ENCODE measurements at regions of chr20 and their contacts with region 1.

Region 1: GRCh38 chr20:57266291-57267157 is at the start of gene BMP7:
- DNase-seq: no peak
- ATAC-seq: no peak
- H3K4me3 Mint-ChIP-seq: no peak within 1 kb of the TSS
- H3K27ac Mint-ChIP-seq: no peak within 1 kb of the TSS
- H3K4me1 Mint-ChIP-seq: peaks cover 3% of the 10 kb centered on the region
- H3K27me3 Mint-ChIP-seq: peaks cover 62% of the 10 kb centered on the region
- total RNA-seq, gene BMP7: 0.41 TPM in 1 of 2 experiments, not detected in the other

Region 2: GRCh38 chr20:56925082-56925830 is 341.3 kb before region 1 on chr20:
- CTCF ChIA-PET with region 1: no interaction called
- POLR2A ChIA-PET with region 1: no interaction called
- intact Hi-C with region 1: loop called in 1 of 2 experiments (anchors 10 kb)
- DNase-seq: peak; percentile 7
- ATAC-seq: no peak
- H3K4me3 Mint-ChIP-seq: no peak overlapping the region
- H3K27ac Mint-ChIP-seq: no peak overlapping the region
- H3K4me1 Mint-ChIP-seq: peaks cover 7% of the 10 kb centered on the region
- H3K27me3 Mint-ChIP-seq: peaks cover 67% of the 10 kb centered on the region

Region 3: DNA sequence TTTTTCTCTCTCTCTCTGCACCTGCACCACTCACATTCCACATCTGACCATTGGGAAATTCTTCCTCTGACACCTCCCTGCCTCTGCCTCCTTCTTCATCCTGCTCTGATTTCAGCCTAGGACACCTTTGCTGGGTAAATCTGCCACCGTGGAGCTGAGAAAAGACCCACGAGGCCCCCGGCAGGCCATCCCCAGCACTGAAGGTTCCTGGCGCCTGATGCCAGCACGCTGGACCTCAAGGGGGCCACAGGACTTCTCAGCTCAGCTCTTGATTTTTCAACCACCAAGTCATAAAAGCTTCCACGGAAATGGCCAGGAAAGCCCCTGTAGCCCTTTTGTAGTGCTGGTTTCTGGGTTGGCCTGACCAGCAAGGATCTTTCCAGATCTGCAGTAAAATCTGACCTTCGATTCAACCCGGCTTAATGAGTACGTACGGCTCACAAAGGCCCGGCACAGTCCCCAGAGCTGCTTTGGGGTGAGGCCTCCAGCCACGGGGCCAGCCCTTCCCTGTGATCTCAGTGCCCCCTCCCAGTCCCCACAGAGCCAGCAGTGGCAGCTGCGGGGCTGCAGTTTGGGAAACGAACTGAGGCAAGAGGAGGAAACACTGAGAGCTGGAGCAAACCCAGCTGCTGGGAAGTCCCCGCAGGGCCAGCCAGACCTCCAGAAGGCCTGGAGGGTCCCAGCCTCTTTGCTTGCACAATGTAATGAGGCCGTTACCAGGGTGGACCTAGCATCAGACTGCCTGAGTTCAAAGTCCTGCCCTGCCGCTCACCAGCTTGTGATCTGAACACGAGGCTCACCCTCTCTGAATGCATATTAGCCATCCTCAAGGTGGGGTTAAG is 157.6 kb before region 1 on chr20:
- CTCF ChIA-PET with region 1: no interaction called
- POLR2A ChIA-PET with region 1: no interaction called
- intact Hi-C with region 1: loop called in 1 of 2 experiments (anchors 10 kb)
- DNase-seq: no peak
- ATAC-seq: no peak
- H3K4me3 Mint-ChIP-seq: no peak overlapping the region
- H3K27ac Mint-ChIP-seq: no peak overlapping the region
- H3K4me1 Mint-ChIP-seq: no peaks in the 10 kb centered on the region
- H3K27me3 Mint-ChIP-seq: peaks cover 10% of the 10 kb centered on the region

Measured in activated CD4-positive, alpha-beta T cell treated with anti-CD3 and anti-CD28 coated beads for 36 hours (primary cell).